ENCODE measurements at regions of chr22 and their contacts with region 1.

Region 1: DNA sequence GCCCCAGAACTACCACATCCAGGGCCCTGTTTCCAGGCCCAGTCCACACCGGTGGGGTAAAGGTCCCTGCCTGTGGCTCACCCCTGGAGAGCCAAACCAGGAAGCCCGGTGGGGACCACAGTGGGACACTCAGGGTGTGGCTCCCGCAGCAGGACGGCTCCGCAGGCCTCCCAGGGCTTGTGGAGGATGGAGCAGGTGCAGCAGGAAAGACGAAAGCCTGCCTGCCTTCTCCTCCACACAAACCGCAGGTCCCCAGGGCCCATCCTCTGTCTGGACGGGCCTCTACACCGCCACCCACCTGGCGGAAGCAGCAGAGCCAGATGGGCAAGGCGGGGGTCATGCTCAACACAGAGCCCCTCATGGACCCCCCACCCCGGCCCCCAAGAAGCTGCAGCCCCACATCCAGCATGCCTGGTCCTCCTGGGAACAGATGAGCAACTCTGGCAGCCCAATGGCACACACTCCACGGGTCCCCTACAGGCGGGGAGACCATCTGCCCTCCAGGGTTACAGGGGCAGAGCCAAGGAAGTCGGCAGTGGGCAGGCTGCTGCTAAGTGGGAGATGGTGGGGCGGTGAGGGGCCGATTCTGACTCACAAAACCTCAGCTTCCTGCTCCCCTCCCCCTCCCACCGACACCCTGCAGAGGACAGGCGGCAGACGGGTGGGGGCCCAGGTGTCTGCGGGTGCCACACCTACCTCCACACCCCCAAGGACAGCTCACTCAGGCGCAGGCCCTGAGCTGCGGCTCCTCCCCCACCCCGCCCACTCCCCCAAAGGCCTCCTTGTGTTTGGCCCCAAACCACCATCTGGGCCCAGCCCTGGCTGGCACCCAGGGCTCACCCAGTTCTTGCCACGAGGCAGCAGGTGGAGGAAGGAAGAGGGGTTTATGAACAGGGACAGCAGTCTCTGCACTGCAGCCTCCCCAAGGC is 5.2 kb downstream of the SBF1 start:
- DNase-seq: peak; percentile 99
- ATAC-seq: peak; percentile 77
- H3K4me3 Mint-ChIP-seq: peak overlapping the region; percentile 69
- H3K27ac Mint-ChIP-seq: peak overlapping the region; percentile 88
- H3K4me1 Mint-ChIP-seq: peaks cover 69% of the 10 kb centered on the region
- H3K27me3 Mint-ChIP-seq: no peaks in the 10 kb centered on the region

Region 2: DNA sequence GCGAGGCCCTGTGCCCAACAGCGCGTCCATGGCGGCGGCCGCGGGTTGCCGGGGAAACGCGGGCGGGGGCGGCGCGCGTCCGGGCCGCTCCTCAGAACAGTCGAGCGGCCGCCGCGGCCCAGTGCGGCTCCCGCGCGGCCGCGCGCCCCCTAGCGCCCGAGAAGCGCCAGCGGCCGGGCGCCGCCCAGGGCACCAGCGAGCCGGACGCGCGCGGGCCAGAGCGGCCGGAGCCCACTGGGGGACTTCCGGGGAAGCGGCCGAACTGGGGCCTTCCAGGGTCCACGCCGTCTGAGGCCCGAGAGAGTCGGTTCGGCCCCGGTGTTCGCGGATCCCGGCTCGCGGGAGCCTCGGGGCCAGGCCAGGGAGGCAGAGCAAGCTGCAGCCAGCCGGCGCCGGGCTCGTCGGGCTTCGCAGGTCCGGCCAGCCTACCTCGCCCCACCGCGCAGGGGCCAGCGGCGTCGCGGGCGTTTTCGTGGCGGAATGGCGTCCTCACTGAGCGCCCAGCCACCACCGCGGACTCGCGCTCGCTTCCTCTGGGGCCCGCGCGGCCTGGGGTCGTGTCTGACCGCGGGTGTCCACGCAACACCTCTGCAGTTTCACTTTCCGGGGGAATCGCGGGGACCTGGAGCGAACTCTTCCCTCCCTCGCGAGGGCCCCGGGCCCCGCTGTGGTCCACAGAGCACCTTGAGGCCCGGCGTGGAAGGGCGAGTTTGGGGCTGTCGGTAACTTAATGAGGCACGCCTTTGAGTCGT is 142.5 kb before region 1 on chr22 and contains the start of gene DENND6B:
- CTCF ChIA-PET with region 1: no interaction called
- DNase-seq: peak; percentile 73
- ATAC-seq: peak; percentile 96
- H3K4me3 Mint-ChIP-seq: peak within 1 kb of the TSS; percentile 74
- H3K27ac Mint-ChIP-seq: peak within 1 kb of the TSS; percentile 83
- H3K4me1 Mint-ChIP-seq: peaks cover 17% of the 10 kb centered on the region
- H3K27me3 Mint-ChIP-seq: peaks cover 13% of the 10 kb centered on the region
- total RNA-seq, gene DENND6B: 5.7 to 8.8 TPM

Region 3: GRCh38 chr22:50444663-50445062 is 25.0 kb before region 1 on chr22:
- CTCF ChIA-PET with region 1: interaction called, 12 read pairs
- DNase-seq: no peak
- ATAC-seq: no peak
- H3K4me3 Mint-ChIP-seq: no peak overlapping the region
- H3K27ac Mint-ChIP-seq: peak overlapping the region; percentile 84
- H3K4me1 Mint-ChIP-seq: peaks cover 24% of the 10 kb centered on the region
- H3K27me3 Mint-ChIP-seq: no peaks in the 10 kb centered on the region

Measured in activated CD8-positive, alpha-beta memory T cell treated with anti-CD3 and anti-CD28 coated beads, Interleukin-2, amount 10 ng/mL, durations not matched to agents 7 days and 5 days (primary cell).